ENCODE measurements at regions of chr11 and their contacts with region 1.

Region 1: GRCh38 chr11:8092587-8093424 is 11.8 kb downstream of the TUB start:
- DNase-seq: peak; percentile 70
- ATAC-seq: peak; percentile 83
- H3K4me3 Mint-ChIP-seq: no peak overlapping the region
- H3K27ac Mint-ChIP-seq: no peak overlapping the region
- H3K4me1 Mint-ChIP-seq: peaks cover 5% of the 10 kb centered on the region
- H3K27me3 Mint-ChIP-seq: no peaks in the 10 kb centered on the region
- CTCF ChIP-seq: peak; percentile 36; the same call in 1 of the 2 replicates

Region 2: DNA sequence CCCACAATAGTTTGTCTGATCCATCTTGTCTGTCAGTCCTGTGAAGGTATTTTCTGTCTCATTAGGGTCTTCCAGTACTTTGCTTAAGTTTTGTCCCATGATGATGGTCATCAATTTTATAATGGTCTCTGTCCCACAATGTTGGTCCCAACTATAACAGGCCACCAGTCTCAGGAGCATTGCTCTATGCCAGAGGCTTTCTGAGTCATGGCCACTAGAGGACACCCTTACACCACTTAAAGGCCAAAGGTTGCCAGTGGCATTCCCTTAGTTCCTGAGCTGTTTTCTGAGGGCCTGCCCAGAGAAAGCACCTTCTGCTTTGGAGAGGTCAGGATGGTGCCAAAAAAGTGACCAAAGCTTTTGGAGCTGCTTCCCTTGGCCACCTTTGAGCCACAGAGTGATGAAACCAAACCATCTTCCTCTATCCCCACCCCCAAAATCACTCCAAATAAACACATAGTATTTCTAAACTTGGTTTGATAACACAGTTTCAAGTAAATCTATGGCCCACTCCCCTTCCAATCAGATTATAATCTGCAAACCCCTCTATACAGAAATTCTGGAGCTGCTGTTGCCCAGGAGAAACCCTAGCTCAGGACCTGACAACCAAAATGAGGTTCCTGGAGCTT is 86.3 kb before region 1 on chr11:
- CTCF ChIA-PET with region 1: interaction called, 257 read pairs
- POLR2A ChIA-PET with region 1: interaction called, 4 read pairs
- DNase-seq: peak; percentile 75
- ATAC-seq: peak; percentile 96
- H3K4me3 Mint-ChIP-seq: no peak overlapping the region
- H3K27ac Mint-ChIP-seq: no peak overlapping the region
- H3K4me1 Mint-ChIP-seq: no peaks in the 10 kb centered on the region
- H3K27me3 Mint-ChIP-seq: no peaks in the 10 kb centered on the region; the same call in 1 of the 2 replicates
- CTCF ChIP-seq: peak; percentile 71

Region 3: DNA sequence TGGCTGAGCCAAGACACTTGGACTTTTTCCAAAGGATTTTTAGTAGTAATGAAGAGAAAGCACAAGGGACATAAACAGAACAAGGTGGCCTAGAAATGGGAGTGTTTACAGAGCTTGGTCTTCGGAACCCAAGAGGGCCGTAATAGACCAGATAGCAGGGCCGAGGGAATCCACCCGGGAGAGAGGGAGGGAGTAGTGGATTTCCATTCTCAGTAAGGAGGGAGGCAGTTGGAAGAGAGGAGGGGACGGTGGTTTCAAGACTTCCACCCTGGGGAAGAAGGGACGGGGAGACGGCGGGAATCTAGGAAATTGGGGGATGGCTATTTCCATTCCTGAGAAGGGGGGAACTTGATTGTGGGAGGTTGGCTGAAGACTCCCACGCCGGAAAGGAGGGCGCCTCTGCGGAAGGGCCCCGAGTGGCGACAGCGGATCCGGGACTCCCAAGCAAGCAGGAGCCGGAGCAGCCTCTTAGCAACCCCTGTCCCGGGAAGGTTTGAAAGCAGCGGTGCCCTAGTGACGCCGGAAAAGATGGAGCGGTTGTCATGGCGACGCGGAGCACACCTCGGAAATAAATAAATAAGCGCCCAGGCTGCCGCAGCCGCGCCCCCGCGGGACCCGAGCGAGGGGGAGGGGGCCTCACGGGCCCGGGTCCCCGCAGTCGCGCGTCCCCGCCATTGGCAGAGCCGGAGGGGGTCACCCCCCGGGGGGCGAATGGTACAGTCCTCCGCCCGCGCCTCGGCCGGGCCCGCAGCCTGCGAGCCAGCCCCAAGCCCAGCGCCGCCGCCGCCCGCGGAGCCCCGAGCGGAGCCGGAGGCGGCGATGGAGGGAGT is 74.1 kb before region 1 on chr11:
- CTCF ChIA-PET with region 1: interaction called, 58 read pairs
- POLR2A ChIA-PET with region 1: interaction called, 4 read pairs
- DNase-seq: peak; percentile 74
- ATAC-seq: peak; percentile 59
- H3K4me3 Mint-ChIP-seq: peak overlapping the region; percentile 75
- H3K27ac Mint-ChIP-seq: no peak overlapping the region
- H3K4me1 Mint-ChIP-seq: peaks cover 32% of the 10 kb centered on the region
- H3K27me3 Mint-ChIP-seq: peaks cover 81% of the 10 kb centered on the region
- CTCF ChIP-seq: no peak

Region 4: GRCh38 chr11:8033305-8034105 is 59.3 kb before region 1 on chr11:
- CTCF ChIA-PET with region 1: interaction called, 278 read pairs
- POLR2A ChIA-PET with region 1: no interaction called
- DNase-seq: peak; percentile 78
- ATAC-seq: peak; percentile 92
- H3K4me3 Mint-ChIP-seq: peak overlapping the region; percentile 51
- H3K27ac Mint-ChIP-seq: no peak overlapping the region
- H3K4me1 Mint-ChIP-seq: peaks cover 15% of the 10 kb centered on the region
- H3K27me3 Mint-ChIP-seq: peaks cover 10% of the 10 kb centered on the region
- CTCF ChIP-seq: peak; percentile 29; the same call in 1 of the 2 replicates

Region 5: GRCh38 chr11:8070417-8071115 is 22.2 kb before region 1 on chr11:
- CTCF ChIA-PET with region 1: interaction called, 35 read pairs
- POLR2A ChIA-PET with region 1: no interaction called
- DNase-seq: no peak
- ATAC-seq: peak; percentile 40
- H3K4me3 Mint-ChIP-seq: no peak overlapping the region
- H3K27ac Mint-ChIP-seq: no peak overlapping the region
- H3K4me1 Mint-ChIP-seq: peaks cover 48% of the 10 kb centered on the region
- H3K27me3 Mint-ChIP-seq: peaks cover 12% of the 10 kb centered on the region; the same call in 1 of the 2 replicates
- CTCF ChIP-seq: no peak